CD14-positive monocyte (primary cell): ENCODE measurements at regions of chr2 and their contacts with region 1.

Region 1: DNA sequence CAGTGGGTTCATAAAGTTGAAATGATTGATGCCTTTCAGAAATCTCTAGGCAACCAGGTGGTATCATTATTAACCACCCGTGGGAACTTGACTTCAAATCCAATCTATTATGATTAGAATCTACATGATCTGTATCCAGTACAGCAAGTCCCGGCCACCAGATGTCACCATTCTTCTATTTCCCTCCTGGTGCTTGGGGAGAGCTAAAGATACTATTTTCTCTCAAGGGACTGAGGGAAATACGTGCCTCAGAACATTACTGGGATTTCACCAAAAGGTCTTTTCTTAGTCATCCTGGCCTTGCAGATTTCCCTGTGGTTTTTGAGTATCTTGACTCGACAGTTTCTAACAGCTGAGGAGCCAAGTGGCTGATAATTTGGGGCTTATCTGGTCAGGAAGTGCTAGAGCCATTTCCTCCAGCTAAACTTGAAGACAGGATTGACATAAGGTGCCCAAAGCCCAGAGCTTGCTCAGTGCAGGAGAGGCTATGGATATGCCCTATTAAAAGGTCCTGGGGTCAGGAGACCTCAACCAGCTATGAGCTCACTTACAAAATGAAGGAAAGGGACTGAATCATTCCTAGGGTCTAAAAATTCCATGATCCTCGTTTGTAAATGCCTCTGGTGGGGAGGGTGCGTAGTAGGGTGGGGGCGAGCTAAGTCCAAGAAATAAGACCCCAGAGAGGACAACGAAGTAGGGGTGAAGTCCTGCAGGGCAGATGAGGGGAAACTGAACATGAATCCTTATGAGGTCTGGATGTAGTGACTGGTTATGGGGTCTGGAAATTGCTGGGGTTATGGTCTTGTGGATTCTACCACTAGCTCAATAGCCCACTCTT is 135.4 kb upstream of the MGAT5 start:
- DNase-seq: peak; percentile 75 to 87 (median 85)
- H3K4me3 ChIP-seq: peak overlapping the region in 1 of 3 experiments; percentile 42
- H3K4me3 Mint-ChIP-seq: peak overlapping the region; percentile 51 to 64
- H3K27ac ChIP-seq: no peak overlapping the region
- H3K27ac Mint-ChIP-seq: peak overlapping the region in 3 of 7 donors; percentile 8 to 67 (median 36)
- H3K4me1 ChIP-seq: peaks cover 20 to 31% of the 10 kb centered on the region in 2 donors
- H3K4me1 Mint-ChIP-seq: peaks cover 34% of the 10 kb centered on the region
- H3K27me3 ChIP-seq: no peaks in the 10 kb centered on the region
- H3K27me3 Mint-ChIP-seq: no peaks in the 10 kb centered on the region
- CTCF ChIP-seq: peak; percentile 79

Region 2: GRCh38 chr2:134193006-134193405 is 74.5 kb after region 1 on chr2:
- intact Hi-C with region 1: loop called in 1 of 2 experiments (anchors 10 kb)
- DNase-seq: peak in 1 of 3 donors; percentile 19
- H3K4me3 ChIP-seq: no peak overlapping the region
- H3K4me3 Mint-ChIP-seq: no peak overlapping the region
- H3K27ac ChIP-seq: no peak overlapping the region
- H3K27ac Mint-ChIP-seq: no peak overlapping the region
- H3K4me1 ChIP-seq: no peaks in the 10 kb centered on the region
- H3K4me1 Mint-ChIP-seq: peaks cover 29% of the 10 kb centered on the region
- H3K27me3 ChIP-seq: no peaks in the 10 kb centered on the region
- H3K27me3 Mint-ChIP-seq: peaks cover 0 to 3% (median 2%) of the 10 kb centered on the region in 3 donors
- CTCF ChIP-seq: no peak

Region 3: GRCh38 chr2:134245340-134245984 is 127.0 kb after region 1 on chr2:
- intact Hi-C with region 1: loop called (anchors 2 kb)
- DNase-seq: peak; percentile 53 to 71 (median 68)
- H3K4me3 ChIP-seq: no peak overlapping the region
- H3K4me3 Mint-ChIP-seq: no peak overlapping the region
- H3K27ac ChIP-seq: no peak overlapping the region
- H3K27ac Mint-ChIP-seq: peak overlapping the region in 1 of 7 donors; percentile 69
- H3K4me1 ChIP-seq: peaks cover 0 to under 1% of the 10 kb centered on the region in 2 donors
- H3K4me1 Mint-ChIP-seq: peaks cover 39% of the 10 kb centered on the region
- H3K27me3 ChIP-seq: no peaks in the 10 kb centered on the region
- H3K27me3 Mint-ChIP-seq: no peaks in the 10 kb centered on the region
- CTCF ChIP-seq: peak; percentile 91

Region 4: DNA sequence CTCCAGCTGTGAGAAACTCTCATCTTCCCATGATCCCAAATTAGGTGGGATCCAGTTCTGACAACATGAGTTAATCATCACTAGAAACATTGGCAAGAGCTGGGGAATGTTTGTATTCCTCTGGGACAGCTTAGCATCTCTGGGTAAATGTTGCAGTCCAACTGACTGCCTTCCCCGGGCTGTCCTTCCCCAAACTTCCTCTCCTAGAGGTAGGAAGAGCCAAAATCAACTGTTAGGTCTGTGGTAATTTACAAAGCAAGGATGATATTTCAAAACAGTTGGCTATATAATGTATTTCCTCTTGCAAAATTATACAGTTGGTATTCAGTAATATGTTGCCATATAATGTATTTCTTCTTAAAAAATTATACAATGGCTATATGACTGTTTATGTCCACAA is 283.9 kb after region 1 on chr2:
- intact Hi-C with region 1: loop called in 1 of 2 experiments (anchors 10 kb)
- DNase-seq: peak; percentile 5 to 17 (median 17)
- H3K4me3 ChIP-seq: no peak overlapping the region
- H3K4me3 Mint-ChIP-seq: peak overlapping the region in 1 of 2 donors; percentile 13
- H3K27ac ChIP-seq: peak overlapping the region in 1 of 2 donors; percentile 38
- H3K27ac Mint-ChIP-seq: peak overlapping the region in 2 of 7 donors; percentile 55 to 61
- H3K4me1 ChIP-seq: peaks cover 30 to 31% of the 10 kb centered on the region in 2 donors
- H3K4me1 Mint-ChIP-seq: peaks cover 62% of the 10 kb centered on the region
- H3K27me3 ChIP-seq: no peaks in the 10 kb centered on the region
- H3K27me3 Mint-ChIP-seq: peaks cover 0 to 2% (median 0%) of the 10 kb centered on the region in 3 donors
- CTCF ChIP-seq: no peak